GM18951 (cell line): ENCODE measurements at regions of chr12 and their contacts with region 1.

Region 1: GRCh38 chr12:96061864-96062453 is 26.6 kb upstream of the LTA4H start:
- POLR2A ChIP-seq: no peak

Region 2: DNA sequence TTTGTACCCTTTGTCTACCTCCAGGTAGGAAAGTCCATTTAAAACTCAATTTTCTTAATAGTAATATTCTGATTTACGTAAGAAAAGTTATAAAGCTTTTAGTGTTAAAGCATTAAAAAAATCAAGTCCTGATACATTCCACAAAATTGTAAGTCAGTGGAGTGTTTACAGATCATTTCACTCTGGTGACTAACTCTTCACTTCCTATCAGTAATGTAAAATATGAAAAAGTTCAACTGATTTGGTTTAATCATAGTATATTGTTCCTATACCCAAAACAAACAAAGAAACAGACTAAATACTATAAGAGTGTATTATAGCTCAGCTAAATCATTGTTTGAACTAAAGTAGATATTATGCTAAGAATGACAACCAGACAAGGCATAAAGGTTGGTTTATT is 758.5 kb before region 1 on chr12:
- in situ Hi-C with region 1: no loop called
- POLR2A ChIP-seq: no peak

Region 3: GRCh38 chr12:96219698-96220206 is 157.8 kb after region 1 on chr12:
- in situ Hi-C with region 1: loop called (anchors 10 kb)
- POLR2A ChIP-seq: no peak

Region 4: DNA sequence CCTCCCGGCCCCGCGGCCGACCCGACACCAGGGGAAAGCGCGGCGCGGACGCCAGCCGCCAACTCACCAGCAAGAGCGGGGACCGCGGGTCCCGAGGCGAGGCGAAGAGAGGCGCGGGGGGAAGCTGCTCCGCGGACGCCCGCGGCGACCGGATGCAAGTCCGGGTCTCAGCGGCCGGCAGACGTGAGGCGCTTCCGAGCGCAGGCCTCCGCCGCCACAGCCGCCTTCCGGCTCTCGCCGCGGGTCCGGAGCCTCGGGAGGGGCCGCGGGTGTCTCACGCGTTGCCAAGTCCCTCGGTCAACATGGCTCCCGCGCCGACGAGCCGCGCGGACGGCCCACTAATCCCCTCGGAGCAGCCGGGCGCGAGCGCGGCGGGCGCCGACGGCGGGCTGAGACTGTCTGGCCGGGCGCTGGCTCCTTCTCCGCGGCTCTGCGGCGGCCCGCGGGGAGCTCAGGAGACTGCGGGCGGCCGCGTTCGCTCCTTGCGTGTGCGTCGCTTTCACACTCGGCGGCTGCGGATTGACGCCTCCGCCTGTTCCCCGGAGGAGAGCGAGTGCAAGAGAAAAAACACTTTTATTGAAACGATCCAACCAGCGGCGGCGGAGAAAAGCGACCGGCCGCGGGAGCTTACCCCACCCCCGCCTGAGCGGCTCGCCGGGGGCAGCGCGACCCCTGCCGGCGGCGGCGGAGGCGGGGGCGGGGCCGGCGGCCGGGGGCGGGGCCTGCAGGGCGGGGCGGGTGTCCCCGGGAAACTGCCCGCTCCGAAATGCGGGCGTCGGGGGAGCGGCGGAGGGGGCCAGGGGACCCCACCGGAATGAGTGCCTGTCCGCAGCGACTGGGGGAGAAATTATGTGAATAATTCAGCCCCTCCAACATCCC is 338.2 kb after region 1 on chr12 and contains the start of gene CDK17:
- in situ Hi-C with region 1: loop called (anchors 25 kb)
- POLR2A ChIP-seq: peak; percentile 68